Gastrocnemius medialis (tissue), 4 donors: ENCODE measurements at regions of chr12 and their contacts with region 1.

Region 1: GRCh38 chr12:79555028-79555930 is 135.5 kb downstream of the PAWR start:
- DNase-seq: no peak
- ATAC-seq: no peak
- H3K4me3 ChIP-seq: no peak overlapping the region
- H3K27ac ChIP-seq: no peak overlapping the region
- H3K4me1 ChIP-seq: no peaks in the 10 kb centered on the region
- H3K27me3 ChIP-seq: no peaks in the 10 kb centered on the region
- CTCF ChIP-seq: peak in 3 of 5 experiments; percentile 23 to 32 (median 29)
- POLR2A ChIP-seq: no peak

Region 2: DNA sequence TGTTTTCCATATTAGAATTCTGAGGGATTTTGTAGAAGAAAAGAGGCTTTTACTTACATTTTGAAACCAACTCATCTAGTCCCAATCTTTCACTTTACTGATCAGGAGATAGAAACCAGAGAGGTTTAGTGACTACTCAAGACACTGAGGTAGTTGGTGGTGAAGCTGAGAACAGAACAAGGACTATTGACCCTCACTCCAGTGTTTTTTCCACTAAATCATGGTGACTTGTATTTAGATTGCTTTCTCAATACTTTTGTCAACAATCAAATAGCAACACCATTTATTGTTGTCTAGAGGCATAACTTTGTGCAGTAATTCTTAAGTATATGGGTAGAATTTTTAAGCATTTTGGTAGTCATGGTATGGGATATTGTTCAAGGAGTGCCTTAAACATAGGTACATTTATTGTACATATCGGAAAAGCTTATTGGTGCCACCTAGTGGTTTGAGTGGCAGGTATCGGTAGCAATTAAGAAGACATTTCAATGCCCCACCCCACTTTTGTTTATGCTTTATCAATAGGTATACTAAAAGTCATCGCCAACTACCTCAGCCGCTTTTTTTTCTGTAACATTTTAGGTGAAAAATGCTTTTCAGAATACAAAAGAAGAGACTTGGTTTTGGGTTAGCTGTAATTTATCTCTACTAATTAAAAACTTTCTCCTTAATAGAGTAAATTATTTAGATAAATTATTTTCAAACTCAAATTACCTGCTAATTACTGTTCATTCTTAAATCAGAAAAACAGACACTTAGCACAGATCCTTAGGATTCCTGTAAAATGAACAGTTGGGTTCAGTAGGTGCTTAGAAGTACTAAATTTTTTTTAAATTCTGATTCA is 182.8 kb after region 1 on chr12:
- in situ Hi-C with region 1: loop called in 2 of 4 experiments (anchors 25 kb)
- intact Hi-C with region 1: loop called (anchors 10 kb)
- DNase-seq: no peak
- ATAC-seq: no peak
- H3K4me3 ChIP-seq: no peak overlapping the region
- H3K27ac ChIP-seq: no peak overlapping the region
- H3K4me1 ChIP-seq: no peaks in the 10 kb centered on the region
- H3K27me3 ChIP-seq: no peaks in the 10 kb centered on the region
- CTCF ChIP-seq: peak in 4 of 5 experiments; percentile 19 to 56 (median 46)
- POLR2A ChIP-seq: no peak

Region 3: GRCh38 chr12:79747274-79747673 is 192.0 kb after region 1 on chr12:
- in situ Hi-C with region 1: loop called in 2 of 4 experiments (anchors 25 kb)
- intact Hi-C with region 1: loop called (anchors 10 kb)
- DNase-seq: no peak
- ATAC-seq: no peak
- H3K4me3 ChIP-seq: no peak overlapping the region
- H3K27ac ChIP-seq: no peak overlapping the region
- H3K4me1 ChIP-seq: no peaks in the 10 kb centered on the region
- H3K27me3 ChIP-seq: no peaks in the 10 kb centered on the region
- CTCF ChIP-seq: no peak
- POLR2A ChIP-seq: no peak

Region 4: GRCh38 chr12:80269803-80270552 is 714.7 kb after region 1 on chr12:
- in situ Hi-C with region 1: loop called (anchors 10 to 25 kb)
- intact Hi-C with region 1: loop called (anchors 5 kb)
- DNase-seq: no peak
- ATAC-seq: no peak
- H3K4me3 ChIP-seq: no peak overlapping the region
- H3K27ac ChIP-seq: no peak overlapping the region
- H3K4me1 ChIP-seq: no peaks in the 10 kb centered on the region
- H3K27me3 ChIP-seq: no peaks in the 10 kb centered on the region
- CTCF ChIP-seq: peak; percentile 41 to 65 (median 54)
- POLR2A ChIP-seq: no peak